ENCODE measurements at regions of chr3 and their contacts with region 1.

Region 1: GRCh38 chr3:185770109-185770508 is 54.7 kb downstream of the IGF2BP2 start:
- DNase-seq: no peak
- H3K4me3 ChIP-seq: no peak overlapping the region
- H3K27ac ChIP-seq: no peak overlapping the region
- H3K4me1 ChIP-seq: peaks cover 34% of the 10 kb centered on the region
- H3K27me3 ChIP-seq: no peaks in the 10 kb centered on the region
- CTCF ChIP-seq: no peak
- POLR2A ChIP-seq: no peak

Region 2: DNA sequence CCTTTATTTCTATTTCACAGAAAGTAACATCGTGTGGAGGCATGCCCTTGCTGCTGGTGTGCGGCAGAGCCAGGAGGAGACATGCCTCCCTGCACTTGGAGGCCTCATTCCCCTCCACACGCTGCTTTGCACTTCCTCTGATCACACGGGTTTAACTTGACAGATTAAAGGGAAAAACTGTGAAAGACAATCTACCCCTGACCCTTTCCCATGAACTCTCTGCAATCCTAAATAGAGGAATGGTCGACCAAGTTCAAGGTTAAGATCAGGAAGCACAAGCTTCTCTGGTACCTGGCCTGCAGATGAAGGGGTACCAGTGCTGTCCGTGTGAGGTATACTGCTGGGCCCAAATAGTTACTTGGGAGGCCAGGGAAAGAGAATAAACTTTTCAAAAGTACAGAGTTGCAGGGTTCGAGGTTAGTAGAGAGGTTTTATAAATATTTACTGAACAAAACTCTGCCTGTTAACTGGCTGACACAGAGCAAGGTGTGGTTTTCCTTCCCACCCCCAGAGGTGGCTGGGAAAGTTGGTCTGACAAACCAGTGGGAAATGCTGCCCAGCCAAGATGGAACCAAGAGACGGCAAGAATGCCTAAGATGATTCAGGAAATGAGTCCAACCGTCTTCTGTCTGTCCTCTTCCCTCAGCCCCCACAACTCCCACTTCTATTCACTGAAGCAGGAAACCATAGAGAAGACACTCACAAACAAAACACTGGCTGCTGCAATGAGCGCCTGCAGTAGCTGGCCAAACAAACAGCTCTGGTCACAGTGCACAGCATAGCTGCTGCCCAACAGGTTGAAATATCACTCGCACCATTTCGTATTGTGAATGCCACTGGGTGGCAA is 24.9 kb before region 1 on chr3:
- CTCF ChIA-PET with region 1: interaction called, 347 read pairs
- POLR2A ChIA-PET with region 1: no interaction called
- dilution Hi-C with region 1: no loop called
- intact Hi-C with region 1: no loop called
- DNase-seq: peak; percentile 81
- H3K4me3 ChIP-seq: no peak overlapping the region
- H3K27ac ChIP-seq: peak overlapping the region; percentile 79
- H3K4me1 ChIP-seq: peaks cover 29% of the 10 kb centered on the region
- H3K27me3 ChIP-seq: no peaks in the 10 kb centered on the region
- CTCF ChIP-seq: no peak
- POLR2A ChIP-seq: peak; percentile 55

Region 3: DNA sequence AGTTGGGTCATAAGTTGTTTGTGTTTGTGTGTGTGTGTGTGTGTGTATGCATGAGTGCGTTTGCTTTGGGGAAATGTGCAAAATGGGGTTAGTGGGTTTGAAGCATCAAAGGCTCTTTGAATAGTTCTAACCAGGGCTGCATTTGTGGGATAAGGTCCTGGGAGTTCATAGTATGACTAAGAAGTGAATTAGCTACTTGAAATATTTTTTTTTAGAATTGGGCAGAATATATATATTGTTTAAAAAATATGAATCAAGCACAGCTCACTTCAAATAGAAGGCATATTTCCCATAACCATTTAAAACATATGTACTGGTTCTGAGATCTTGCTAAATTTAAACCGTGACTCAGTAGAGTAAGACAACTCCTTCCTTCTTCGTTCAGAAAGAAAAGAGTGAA is 11.7 kb after region 1 on chr3:
- CTCF ChIA-PET with region 1: interaction called, 71 read pairs
- POLR2A ChIA-PET with region 1: no interaction called
- dilution Hi-C with region 1: no loop called
- intact Hi-C with region 1: loop called (anchors 1 kb)
- DNase-seq: no peak
- H3K4me3 ChIP-seq: no peak overlapping the region
- H3K27ac ChIP-seq: no peak overlapping the region
- H3K4me1 ChIP-seq: no peaks in the 10 kb centered on the region
- H3K27me3 ChIP-seq: no peaks in the 10 kb centered on the region
- CTCF ChIP-seq: no peak
- POLR2A ChIP-seq: no peak

Region 4: DNA sequence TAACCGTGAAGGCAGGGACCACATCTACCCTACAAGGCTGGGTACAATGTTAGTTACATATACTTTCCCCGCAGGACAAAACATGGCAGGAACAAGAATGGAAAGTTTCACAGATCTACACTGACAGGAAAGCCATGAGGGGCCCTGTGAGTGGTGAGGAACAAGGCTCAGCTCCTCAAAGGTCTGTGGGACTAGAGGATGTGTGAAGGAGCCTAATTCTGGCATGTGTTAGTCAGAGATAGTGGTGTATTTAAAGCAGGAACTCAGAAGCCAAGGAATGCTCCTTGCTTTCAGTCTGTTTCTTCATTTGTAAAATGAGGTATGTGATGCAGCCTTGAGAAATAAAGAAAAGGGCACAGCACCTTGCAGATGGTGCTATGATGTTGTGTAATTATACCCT is 313.6 kb after region 1 on chr3:
- CTCF ChIA-PET with region 1: no interaction called
- POLR2A ChIA-PET with region 1: no interaction called
- dilution Hi-C with region 1: no loop called
- intact Hi-C with region 1: no loop called
- DNase-seq: no peak
- H3K4me3 ChIP-seq: no peak overlapping the region
- H3K27ac ChIP-seq: no peak overlapping the region
- H3K4me1 ChIP-seq: no peaks in the 10 kb centered on the region
- H3K27me3 ChIP-seq: no peaks in the 10 kb centered on the region
- CTCF ChIP-seq: no peak
- POLR2A ChIP-seq: no peak

Measured in endothelial cell of umbilical vein (primary cell).